HepG2 (cell line): ENCODE measurements at regions of chrX and their contacts with region 1.

Region 1: DNA sequence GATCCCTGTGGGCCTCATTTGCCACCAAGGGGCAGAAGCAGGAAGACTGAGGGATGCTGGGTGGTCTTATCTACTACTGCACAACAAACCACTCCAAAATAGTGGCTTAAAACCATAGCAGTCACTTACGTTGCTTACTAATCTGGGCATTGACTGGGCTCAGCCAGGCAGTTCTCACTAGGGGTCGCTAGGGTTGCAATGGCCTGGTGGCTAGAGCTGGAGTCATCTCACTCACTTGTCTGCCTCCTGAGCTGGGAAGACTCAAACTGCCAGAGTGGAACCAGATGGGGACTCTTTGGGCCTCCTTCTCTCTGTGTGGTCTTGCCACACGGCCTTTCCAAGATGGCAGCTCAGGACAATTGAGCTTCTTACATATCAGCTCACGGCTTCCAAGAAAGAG is 216.3 kb upstream of the BCOR start:
- DNase-seq: no peak
- ATAC-seq: peak; percentile 64
- H3K4me3 ChIP-seq: no peak overlapping the region
- H3K27ac ChIP-seq: no peak overlapping the region
- H3K4me1 ChIP-seq: no peaks in the 10 kb centered on the region
- H3K27me3 ChIP-seq: no peaks in the 10 kb centered on the region
- CTCF ChIP-seq: peak; percentile 50
- EP300 ChIP-seq: no peak
- POLR2A ChIP-seq: no peak
- RAD21 ChIP-seq: no peak

Region 2: DNA sequence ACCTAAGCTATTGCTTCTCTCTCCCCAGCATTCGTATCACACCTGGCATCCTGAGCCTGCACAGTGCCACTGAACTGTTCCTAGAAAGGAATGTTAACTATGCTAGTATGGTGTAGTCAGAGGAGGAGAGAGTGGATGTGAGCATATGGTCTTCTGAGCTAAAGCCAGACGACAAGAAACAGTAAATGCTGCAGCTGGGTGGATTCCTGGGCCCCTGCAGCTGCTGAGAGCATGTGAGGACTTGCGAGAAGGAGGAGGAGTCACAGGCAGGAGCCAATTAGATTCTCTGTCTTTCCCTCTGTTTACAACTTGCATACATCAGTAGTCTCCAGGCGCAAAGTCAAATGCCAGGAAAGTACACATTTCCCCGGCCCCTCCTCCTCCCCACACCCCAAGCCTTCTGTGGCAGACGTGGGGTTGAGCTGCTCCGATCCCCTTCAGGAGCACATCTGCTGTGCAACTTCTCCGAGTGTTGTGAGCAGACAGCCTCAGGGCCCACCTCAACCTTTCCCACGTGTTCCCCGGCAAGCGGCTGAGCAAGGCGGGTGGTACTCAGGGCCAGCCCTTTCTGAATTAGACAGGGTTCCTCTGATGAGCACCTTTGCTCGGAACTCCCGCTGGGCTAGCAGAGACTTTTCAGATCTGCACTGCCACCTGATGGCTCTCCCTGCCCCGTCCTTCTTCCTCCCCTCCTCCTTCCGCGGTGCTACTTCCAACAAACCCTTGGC is 158.0 kb after region 1 on chrX:
- CTCF ChIA-PET with region 1: no interaction called
- POLR2A ChIA-PET with region 1: no interaction called
- in situ Hi-C with region 1: loop called (anchors 10 kb)
- intact Hi-C with region 1: no loop called
- DNase-seq: peak; percentile 35
- ATAC-seq: peak; percentile 54
- H3K4me3 ChIP-seq: peak overlapping the region in 2 of 3 experiments; percentile 13 to 43; a peak in 2 of 6 replicates
- H3K27ac ChIP-seq: no peak overlapping the region
- H3K4me1 ChIP-seq: peaks cover 47% of the 10 kb centered on the region
- H3K27me3 ChIP-seq: no peaks in the 10 kb centered on the region
- CTCF ChIP-seq: peak; percentile 55
- EP300 ChIP-seq: no peak
- POLR2A ChIP-seq: no peak
- RAD21 ChIP-seq: no peak

Region 3: GRCh38 chrX:40897718-40898270 is 583.7 kb after region 1 on chrX:
- CTCF ChIA-PET with region 1: no interaction called
- POLR2A ChIA-PET with region 1: no interaction called
- in situ Hi-C with region 1: no loop called
- intact Hi-C with region 1: no loop called
- DNase-seq: no peak
- ATAC-seq: peak; percentile 53; the same call in 2 of the 3 replicates
- H3K4me3 ChIP-seq: peak overlapping the region in 2 of 3 experiments; percentile 37 to 57; a peak in 2 of 6 replicates
- H3K27ac ChIP-seq: no peak overlapping the region
- H3K4me1 ChIP-seq: peaks cover 6% of the 10 kb centered on the region; the same call in 1 of the 2 replicates
- H3K27me3 ChIP-seq: no peaks in the 10 kb centered on the region
- CTCF ChIP-seq: no peak
- EP300 ChIP-seq: no peak
- POLR2A ChIP-seq: no peak
- RAD21 ChIP-seq: no peak